ENCODE measurements at regions of chr17 and their contacts with region 1.

Region 1: DNA sequence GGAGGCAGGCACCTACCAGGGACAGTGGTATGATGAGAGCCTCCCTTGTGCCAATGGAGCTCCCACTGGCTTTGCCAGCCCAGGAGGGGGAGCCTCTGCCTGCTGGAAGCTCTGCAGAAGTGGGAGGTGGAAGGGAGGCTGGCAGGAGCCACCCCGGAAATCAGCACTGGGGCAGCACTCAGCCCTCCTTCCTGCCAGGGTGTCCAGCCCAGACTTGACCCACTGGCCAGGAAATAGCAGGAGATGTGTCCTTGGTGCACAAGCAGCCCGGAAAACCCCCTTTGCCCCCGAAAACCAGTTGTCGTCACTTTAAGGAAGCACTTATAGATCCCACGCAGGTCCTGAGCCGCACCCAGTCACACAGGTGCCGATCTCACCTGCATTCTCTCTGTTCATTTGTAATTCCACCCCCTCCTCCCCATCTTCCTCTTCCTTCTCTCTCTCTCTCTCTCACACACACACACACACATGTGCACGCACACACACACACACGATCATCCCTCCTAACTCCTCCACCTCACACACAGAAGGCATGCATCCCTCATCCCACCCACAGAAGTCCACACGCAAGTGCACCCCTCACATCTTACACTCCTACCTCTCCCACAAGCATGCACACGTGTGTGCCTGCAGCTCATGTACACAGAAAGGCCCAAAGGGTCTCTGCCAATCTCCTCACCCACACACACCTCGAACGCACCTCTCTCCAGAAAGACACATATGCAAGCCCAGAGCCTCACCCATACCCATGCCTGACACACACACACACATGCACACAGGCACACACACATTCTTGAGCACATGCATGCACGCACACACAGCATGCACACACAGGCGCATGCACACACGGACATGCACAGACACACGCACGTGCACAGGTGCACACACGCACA is 49.1 kb upstream of the CACNG4 start:
- DNase-seq: peak; percentile 71
- H3K4me3 Mint-ChIP-seq: no peak overlapping the region
- H3K27ac Mint-ChIP-seq: no peak overlapping the region
- H3K4me1 Mint-ChIP-seq: no peaks in the 10 kb centered on the region
- H3K27me3 Mint-ChIP-seq: no peaks in the 10 kb centered on the region
- CTCF ChIP-seq: peak; percentile 39

Region 2: DNA sequence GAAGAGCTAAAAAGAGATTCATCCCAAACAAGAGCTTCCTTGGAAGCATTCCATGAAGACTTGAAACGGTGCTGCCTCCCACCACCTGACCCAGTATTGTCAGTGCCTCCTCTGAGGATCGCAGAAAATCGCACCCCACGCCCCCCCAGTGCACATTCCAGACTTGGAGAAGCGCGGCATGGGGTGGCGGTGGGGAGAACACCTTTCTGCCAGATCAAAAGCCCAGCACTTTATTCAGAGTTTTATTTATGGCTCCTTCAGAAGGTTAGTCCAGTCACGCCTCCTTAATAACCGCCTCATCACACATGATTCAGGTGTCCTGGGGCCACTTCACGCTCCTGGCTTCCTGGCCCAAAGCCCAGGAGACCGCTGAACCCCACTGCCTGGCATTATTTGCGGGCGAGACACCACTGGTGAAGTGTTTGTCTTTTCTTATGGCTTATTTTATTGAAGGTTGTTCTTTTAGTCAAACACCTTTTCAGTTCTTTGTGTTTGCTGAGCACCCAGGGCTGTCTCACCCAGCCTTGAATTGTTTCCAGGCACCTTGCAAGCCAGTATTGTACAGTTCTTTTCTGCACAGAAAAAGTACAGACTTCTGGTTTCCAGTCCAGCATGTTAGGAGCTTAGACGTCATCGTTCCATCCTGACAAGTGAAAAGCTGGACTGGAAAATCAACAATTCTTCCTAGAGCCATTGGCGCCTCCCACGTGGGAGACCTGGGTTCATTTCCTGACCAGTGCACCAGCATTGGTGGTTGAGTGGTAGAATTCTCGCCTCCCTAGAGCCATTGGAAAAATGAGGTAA is 160.1 kb before region 1 on chr17:
- CTCF ChIA-PET with region 1: no interaction called
- POLR2A ChIA-PET with region 1: no interaction called
- intact Hi-C with region 1: no loop called
- DNase-seq: peak; percentile 49
- H3K4me3 Mint-ChIP-seq: no peak overlapping the region
- H3K27ac Mint-ChIP-seq: no peak overlapping the region
- H3K4me1 Mint-ChIP-seq: no peaks in the 10 kb centered on the region
- H3K27me3 Mint-ChIP-seq: no peaks in the 10 kb centered on the region
- CTCF ChIP-seq: no peak

Region 3: GRCh38 chr17:66873962-66874361 is 41.5 kb before region 1 on chr17:
- CTCF ChIA-PET with region 1: no interaction called
- POLR2A ChIA-PET with region 1: no interaction called
- intact Hi-C with region 1: no loop called
- DNase-seq: no peak
- H3K4me3 Mint-ChIP-seq: no peak overlapping the region
- H3K27ac Mint-ChIP-seq: no peak overlapping the region
- H3K4me1 Mint-ChIP-seq: no peaks in the 10 kb centered on the region
- H3K27me3 Mint-ChIP-seq: peaks cover 49% of the 10 kb centered on the region
- CTCF ChIP-seq: no peak

Region 4: DNA sequence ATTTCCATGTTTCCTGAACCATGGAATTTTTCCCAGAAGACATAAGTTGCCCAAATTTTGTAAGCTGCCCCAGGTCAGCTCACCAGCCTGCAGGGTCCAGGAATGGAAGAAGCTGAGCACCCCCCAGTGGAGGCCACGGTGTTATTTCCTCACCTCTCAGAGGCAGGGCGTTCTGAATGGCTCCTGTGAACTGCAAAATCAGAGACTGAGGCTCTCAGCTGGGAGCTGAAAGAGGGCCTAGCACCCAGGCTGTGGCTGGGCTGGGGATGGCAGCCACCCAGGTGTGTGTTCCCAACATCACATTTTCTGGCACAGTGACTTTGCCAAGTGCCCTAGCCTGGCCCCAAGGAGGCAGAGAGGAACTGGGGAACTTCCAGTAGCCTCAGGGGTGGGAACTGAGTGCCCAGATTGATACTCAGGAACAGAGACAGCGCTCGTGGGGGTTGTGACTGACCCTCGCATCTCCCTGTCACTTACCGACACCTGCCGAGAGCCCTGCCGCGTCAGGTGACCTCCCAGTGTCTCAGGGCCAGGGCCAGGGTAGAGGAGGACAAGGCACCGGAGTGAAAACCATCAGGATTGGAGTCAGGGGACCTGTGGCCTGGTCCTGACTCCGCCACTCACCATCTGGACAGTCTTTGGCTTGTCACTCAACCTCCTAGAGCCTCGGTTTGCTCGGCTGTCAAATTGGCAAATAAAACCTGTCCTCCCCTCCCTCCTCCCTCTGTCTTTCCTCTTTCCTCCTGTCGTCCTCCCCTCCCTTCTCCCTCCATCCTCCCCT is 60.3 kb after region 1 on chr17:
- CTCF ChIA-PET with region 1: interaction called, 4 read pairs
- POLR2A ChIA-PET with region 1: no interaction called
- intact Hi-C with region 1: loop called (anchors 1 kb)
- DNase-seq: peak; percentile 60
- H3K4me3 Mint-ChIP-seq: no peak overlapping the region
- H3K27ac Mint-ChIP-seq: no peak overlapping the region
- H3K4me1 Mint-ChIP-seq: peaks cover 11% of the 10 kb centered on the region
- H3K27me3 Mint-ChIP-seq: peaks cover 39% of the 10 kb centered on the region
- CTCF ChIP-seq: peak; percentile 45

Region 5: DNA sequence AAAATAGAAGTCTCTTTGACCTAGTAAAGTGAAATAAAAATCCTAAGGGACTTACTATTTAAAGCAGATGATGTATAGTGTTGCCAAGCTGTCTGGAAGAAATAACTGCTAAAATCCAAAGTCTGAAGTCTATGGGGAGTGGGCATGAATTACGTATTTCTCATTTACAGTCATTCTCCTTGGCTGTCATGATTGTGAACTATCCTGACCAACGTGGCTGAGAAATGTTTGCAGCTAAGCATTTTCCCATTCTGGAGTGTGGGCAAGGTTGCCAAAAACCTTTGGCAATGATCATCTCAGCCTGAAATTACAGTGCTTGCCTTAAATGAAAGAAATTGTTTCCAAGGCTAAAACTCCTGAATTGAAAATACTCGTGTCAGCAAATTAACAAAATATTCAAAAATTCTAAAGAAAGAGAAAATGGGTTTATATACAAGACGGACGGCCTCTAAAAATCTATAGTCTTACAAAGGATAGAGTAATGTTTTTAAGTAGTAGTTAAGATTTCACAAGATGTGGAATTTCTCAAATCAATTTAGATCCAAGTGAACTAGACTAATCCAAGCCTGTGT is 206.0 kb after region 1 on chr17:
- CTCF ChIA-PET with region 1: no interaction called
- POLR2A ChIA-PET with region 1: no interaction called
- intact Hi-C with region 1: no loop called
- DNase-seq: no peak
- H3K4me3 Mint-ChIP-seq: no peak overlapping the region
- H3K27ac Mint-ChIP-seq: no peak overlapping the region
- H3K4me1 Mint-ChIP-seq: no peaks in the 10 kb centered on the region
- H3K27me3 Mint-ChIP-seq: no peaks in the 10 kb centered on the region
- CTCF ChIP-seq: no peak

Region 6: GRCh38 chr17:67157732-67158639 is 242.5 kb after region 1 on chr17:
- CTCF ChIA-PET with region 1: interaction called, 3 read pairs
- POLR2A ChIA-PET with region 1: no interaction called
- intact Hi-C with region 1: loop called (anchors 1 kb)
- DNase-seq: peak; percentile 40
- H3K4me3 Mint-ChIP-seq: no peak overlapping the region
- H3K27ac Mint-ChIP-seq: peak overlapping the region; percentile 4
- H3K4me1 Mint-ChIP-seq: peaks cover 17% of the 10 kb centered on the region
- H3K27me3 Mint-ChIP-seq: no peaks in the 10 kb centered on the region
- CTCF ChIP-seq: no peak

Region 7: GRCh38 chr17:67293251-67294203 is 378.1 kb after region 1 on chr17:
- CTCF ChIA-PET with region 1: no interaction called
- POLR2A ChIA-PET with region 1: no interaction called
- intact Hi-C with region 1: loop called (anchors 10 kb)
- DNase-seq: peak; percentile 74
- H3K4me3 Mint-ChIP-seq: no peak overlapping the region
- H3K27ac Mint-ChIP-seq: no peak overlapping the region
- H3K4me1 Mint-ChIP-seq: no peaks in the 10 kb centered on the region
- H3K27me3 Mint-ChIP-seq: no peaks in the 10 kb centered on the region
- CTCF ChIP-seq: peak; percentile 73

Measured in MCF 10A (cell line).